Right ventricle myocardium inferior (tissue), 1 donor: ENCODE measurements at regions of chr7 and their contacts with region 1.

Region 1: GRCh38 chr7:77798394-77799077 is at the starts of genes PHTF2 and TMEM60:
- DNase-seq: peak; percentile 98
- ATAC-seq: peak; percentile 99
- total RNA-seq, gene PHTF2: 21.5 TPM
- total RNA-seq, gene TMEM60: 8.0 TPM

Region 2: DNA sequence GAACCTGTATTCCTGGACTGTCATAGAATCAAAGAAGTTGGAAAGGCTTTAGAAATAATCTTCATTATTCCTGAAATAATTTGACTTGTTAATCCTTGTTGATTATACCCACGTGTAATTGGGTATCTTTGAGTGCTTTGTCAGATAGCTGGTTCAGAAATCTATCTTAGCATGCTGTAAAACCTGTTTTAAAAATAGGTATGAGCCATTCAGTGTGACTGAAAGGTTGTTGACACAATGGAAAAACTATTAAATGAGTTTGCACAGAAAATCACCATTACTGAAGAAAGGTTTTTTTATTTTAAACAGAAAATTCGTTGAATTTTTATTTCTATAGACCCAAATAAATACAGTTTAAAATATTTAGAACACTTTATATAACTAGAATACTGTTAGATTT is 38.8 kb after region 1 on chr7:
- intact Hi-C with region 1: loop called (anchors 5 kb)
- DNase-seq: no peak
- ATAC-seq: no peak

Region 3: GRCh38 chr7:77910124-77910523 is 111.6 kb after region 1 on chr7:
- intact Hi-C with region 1: loop called (anchors 10 kb)
- DNase-seq: no peak
- ATAC-seq: no peak

Region 4: DNA sequence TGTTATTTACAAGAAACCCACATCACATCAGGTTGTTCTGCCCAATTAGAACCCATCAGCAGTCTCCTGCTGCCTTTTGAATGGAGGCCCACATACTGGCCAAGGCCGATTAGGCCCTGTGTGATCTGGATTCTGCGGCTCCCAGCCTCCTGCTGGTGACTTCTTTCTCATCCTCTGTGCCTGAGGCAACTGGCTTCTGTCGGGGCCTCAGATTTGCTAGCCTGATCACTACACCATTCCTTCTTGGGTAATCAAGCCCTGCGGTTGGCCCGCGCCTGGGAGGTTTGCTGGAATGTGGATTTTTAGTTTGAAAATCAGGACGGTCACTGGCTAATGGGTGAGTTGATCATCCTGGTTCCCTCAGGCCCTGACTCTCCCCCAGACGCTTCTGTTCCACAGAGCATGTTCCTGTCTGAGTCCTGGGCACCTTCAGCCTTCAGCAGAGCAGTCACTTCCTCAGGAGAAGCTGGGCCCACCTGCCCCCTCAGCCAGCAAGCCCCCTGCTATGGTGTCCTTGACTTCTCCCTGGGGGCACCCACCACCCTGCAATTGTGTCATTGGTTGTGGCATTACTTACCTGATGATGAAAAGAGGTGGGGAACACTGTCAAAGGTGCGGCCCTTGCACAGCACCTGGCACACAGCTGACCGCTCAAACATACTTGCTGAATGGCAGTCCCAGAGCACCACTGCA is 207.7 kb after region 1 on chr7:
- intact Hi-C with region 1: no loop called
- DNase-seq: peak; percentile 59
- ATAC-seq: no peak